Left ventricle myocardium inferior (tissue), 1 donor: ENCODE measurements at regions of chr16 and their contacts with region 1.

Region 1: DNA sequence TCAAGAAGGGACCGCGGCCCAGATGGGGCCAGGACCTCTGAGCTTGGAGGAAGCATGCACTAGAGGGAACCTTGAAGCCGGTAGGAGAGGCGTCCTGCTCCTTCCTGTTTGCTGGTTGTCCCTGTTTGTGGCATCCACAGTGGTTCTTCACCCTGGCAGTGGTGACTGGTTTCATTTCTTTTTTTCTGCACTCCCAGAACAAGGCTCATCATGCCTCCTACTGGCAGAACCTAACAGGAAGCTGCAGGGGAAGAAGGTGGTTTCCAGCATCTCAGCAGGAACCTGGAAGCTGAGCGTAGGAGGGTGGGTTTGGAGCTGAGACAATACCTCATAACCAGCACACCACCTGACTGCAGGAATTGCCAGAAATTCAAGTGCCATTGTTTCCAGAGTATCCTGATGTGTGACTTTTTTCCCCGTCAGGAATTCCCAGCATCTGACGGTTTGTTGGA is 5.8 kb downstream of the TMEM231 start:
- DNase-seq: no peak
- H3K4me3 ChIP-seq: peak overlapping the region; percentile 28
- H3K27ac ChIP-seq: peak overlapping the region; percentile 76
- H3K4me1 ChIP-seq: peaks cover 14% of the 10 kb centered on the region
- H3K27me3 ChIP-seq: no peaks in the 10 kb centered on the region
- CTCF ChIP-seq: peak; percentile 67

Region 2: GRCh38 chr16:75519881-75520280 is 30.4 kb before region 1 on chr16:
- intact Hi-C with region 1: loop called (anchors 2 kb)
- DNase-seq: no peak
- H3K4me3 ChIP-seq: no peak overlapping the region
- H3K27ac ChIP-seq: no peak overlapping the region
- H3K4me1 ChIP-seq: peaks cover 13% of the 10 kb centered on the region
- H3K27me3 ChIP-seq: no peaks in the 10 kb centered on the region
- CTCF ChIP-seq: no peak